ENCODE measurements at regions of chr3 and their contacts with region 1.

Region 1: GRCh38 chr3:27712136-27713077 is 9.7 kb downstream of the EOMES start:
- DNase-seq: peak; percentile 37 to 96 (median 69)

Region 2: DNA sequence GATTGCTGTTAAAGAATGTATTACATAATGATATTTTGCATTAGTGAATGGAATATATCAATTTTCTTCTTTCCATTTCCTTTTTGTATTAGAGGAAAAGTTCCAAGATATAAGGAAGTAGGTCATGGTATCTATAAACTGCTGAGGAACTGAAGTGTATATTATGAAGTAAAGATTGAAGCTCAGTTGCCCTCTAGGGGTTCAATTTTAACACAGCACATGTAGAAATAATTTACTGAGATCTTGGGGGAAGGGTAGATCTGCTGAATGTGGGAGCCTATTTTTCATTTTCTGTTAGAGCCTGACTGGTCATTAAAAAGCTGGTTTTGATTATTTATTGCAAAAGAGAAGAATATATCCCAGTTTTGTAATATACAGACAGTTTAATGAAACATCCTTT is 574.2 kb after region 1 on chr3:
- intact Hi-C with region 1: loop called (anchors 1 kb)
- DNase-seq: no peak

Region 3: DNA sequence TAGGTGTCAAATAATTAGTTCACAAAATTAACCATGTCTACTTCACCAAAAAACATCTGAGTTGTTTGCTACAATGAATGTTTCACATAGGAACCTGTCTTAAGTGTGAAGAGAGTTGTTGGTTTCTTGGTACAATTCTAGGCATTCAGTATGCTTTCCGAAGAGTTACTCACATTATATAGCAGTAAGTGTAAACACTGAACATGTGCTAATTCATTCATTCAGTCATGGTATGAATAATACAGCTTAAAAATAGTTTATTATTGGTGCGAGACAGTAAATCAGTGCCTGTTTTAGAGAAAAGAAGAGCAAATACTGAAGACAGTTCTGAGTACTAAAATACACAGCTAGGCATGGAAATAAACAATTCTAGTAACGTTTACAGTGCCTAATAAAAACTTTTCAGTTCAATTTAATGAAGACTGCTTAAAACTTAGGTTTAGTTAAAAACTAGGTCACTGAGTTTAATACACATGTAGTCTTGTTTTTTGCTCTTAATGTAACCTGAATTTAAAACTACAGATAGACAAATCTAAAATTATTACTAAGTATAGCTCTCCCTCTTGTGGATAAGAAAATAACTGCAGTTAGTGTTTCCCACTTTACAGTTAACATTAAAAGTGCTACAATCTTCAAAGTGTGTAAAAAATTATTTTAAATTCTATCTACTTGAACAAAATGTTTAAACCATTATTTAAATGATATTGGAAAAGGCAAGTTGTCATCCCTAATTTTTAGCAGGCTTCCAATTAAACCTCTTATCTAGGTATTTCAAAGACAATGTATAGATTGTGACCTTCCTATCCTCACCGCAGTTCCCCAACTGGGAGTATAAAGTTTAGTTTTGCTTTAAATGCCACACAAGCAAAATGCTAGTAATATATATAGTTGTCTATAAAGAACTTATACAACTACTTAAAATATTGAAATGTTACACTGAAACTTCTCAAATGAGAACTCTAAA is 616.1 kb after region 1 on chr3:
- intact Hi-C with region 1: loop called (anchors 5 kb)
- DNase-seq: no peak

Measured in posterior cingulate gyrus (tissue), 11 donors.